Common myeloid progenitor, CD34-positive (primary cell): ENCODE measurements at regions of chr6 and their contacts with region 1.

Region 1: GRCh38 chr6:109073344-109074132 is 21.1 kb downstream of the SESN1 start:
- DNase-seq: peak; percentile 79 to 89 (median 85)
- H3K4me3 ChIP-seq: no peak overlapping the region
- H3K27ac ChIP-seq: no peak overlapping the region
- H3K4me1 ChIP-seq: peaks cover 4 to 30% (median 15%) of the 10 kb centered on the region in 4 experiments
- H3K27me3 ChIP-seq: no peaks in the 10 kb centered on the region

Region 2: GRCh38 chr6:108558372-108559096 is 515.0 kb before region 1 on chr6:
- CTCF ChIA-PET with region 1: interaction called, 13 read pairs
- POLR2A ChIA-PET with region 1: interaction called, 4 read pairs
- DNase-seq: peak; percentile 99 to 100 (median 100)
- H3K4me3 ChIP-seq: peak overlapping the region; percentile 92 to 99 (median 96)
- H3K27ac ChIP-seq: peak overlapping the region; percentile 90 to 93
- H3K4me1 ChIP-seq: peaks cover 9 to 52% (median 38%) of the 10 kb centered on the region in 4 experiments
- H3K27me3 ChIP-seq: no peaks in the 10 kb centered on the region

Region 3: DNA sequence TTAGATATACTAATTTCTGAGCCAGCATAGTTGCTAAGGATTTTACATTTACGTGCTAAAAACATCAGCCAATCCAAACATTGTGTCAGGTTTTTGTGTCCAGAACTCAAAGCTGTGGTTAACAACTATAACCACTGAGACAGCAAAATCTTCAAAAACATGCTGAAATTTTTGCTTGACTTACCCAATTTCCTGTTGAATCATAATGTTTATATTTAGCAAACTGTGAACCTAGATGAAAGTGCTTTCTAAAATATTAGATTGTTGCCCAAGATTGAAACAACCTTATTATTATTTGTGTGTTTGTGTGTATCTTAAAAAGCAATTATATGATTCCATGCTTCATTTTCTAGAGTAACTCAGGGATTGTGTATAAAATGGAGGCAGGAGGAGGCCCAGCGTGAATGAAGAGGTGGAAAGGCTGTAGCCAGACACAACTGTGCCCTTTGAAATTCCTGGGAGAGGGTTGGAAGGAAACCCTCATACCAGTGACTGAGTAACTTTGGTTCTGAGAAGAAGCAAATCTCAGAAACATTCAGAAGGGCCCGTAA is 177.4 kb before region 1 on chr6:
- CTCF ChIA-PET with region 1: interaction called, 10 read pairs
- POLR2A ChIA-PET with region 1: no interaction called
- DNase-seq: peak; percentile 40 to 90 (median 86)
- H3K4me3 ChIP-seq: peak overlapping the region in 1 of 7 experiments; percentile 30
- H3K27ac ChIP-seq: peak overlapping the region; percentile 59 to 75
- H3K4me1 ChIP-seq: peaks cover 6 to 53% (median 29%) of the 10 kb centered on the region in 4 experiments
- H3K27me3 ChIP-seq: no peaks in the 10 kb centered on the region

Region 4: DNA sequence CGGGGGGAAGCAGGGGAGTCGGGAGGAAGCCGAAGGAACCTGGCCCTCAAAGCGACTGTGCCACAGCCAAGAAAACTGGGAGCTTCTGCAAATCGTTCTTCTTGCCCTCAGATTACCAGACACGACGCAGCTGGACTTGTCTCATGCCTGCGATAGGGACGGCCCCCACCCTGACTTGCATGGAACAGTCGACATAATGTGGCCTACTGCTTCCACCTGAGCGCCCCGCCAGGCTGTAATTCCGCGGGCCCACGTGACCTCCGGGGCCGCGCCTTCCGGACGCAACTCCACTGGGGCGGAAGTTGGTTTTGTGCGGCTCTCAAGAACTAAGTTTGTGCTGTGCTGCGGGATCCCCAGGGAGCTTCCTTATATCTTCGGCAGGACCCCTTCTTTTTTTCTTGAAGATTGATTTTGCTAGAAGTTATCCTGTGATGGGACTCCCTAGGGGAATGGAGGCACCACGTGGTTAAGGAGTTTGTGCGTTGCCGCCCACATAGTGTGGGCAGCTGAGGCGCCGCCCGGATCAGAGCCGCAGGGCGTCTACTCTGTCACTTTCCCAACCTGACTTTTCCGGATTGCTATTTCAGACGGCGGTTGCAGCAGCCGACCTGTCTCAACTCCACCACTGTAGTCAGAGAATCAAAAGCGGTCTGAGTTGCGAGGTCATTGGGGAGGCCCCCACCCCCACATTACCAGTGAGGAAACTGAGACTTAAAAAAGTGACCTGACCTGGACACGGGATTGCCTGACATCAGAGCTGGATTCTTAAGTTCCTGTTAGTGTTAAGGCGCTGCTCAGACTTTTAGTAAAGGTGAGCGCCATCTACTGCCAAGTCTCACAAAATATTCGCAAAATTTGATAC is 309.3 kb after region 1 on chr6:
- CTCF ChIA-PET with region 1: interaction called, 14 read pairs
- POLR2A ChIA-PET with region 1: interaction called, 3 read pairs
- DNase-seq: peak; percentile 97 to 98 (median 97)
- H3K4me3 ChIP-seq: peak overlapping the region; percentile 71 to 100 (median 96)
- H3K27ac ChIP-seq: peak overlapping the region; percentile 99 to 100
- H3K4me1 ChIP-seq: peaks cover 39 to 58% (median 42%) of the 10 kb centered on the region in 4 experiments
- H3K27me3 ChIP-seq: no peaks in the 10 kb centered on the region